Activated CD4-positive, alpha-beta memory T cell treated with anti-CD3 and anti-CD28 coated beads, Interleukin-2, amount 10 ng/mL, durations not matched to agents 7 days and 5 days (primary cell): ENCODE measurements at regions of chr1 and their contacts with region 1.

Region 1: DNA sequence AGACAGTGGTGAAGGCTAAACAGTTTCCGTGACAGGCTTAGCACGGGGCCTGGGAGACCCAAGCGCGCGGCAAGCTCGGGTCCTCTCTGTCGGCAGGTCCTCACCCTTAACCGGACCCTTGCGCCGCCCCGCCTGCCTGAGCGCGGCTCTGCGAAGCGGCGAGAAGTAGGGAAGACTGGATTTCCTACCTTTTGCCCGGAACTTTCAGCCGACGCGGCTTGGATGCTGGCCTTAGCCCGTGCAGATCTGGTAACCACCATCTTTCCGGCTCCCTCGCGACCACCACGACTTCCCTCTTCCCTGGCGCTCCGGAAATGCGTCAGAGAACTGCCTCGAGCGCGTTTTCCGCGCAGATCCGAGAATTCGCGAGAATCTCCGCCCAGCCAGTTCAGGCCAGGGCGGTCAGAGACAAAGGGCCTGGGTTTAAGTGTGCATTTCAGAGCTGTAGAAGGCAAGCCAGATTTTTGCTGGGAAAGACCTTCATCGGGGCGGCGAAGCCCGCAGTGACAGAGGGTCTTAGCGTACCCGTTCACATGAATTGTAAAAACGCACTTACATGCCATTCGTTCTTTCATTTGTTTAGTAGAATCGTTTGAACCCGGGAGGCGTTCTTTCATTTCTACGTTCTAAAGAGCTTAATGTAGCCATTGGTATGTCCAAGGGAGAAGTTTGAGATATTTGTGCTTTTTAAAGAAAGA is at the start of gene DNTTIP2:
- DNase-seq: peak; percentile 93
- H3K4me3 Mint-ChIP-seq: peak within 1 kb of the TSS; percentile 88
- H3K27ac Mint-ChIP-seq: peak within 1 kb of the TSS; percentile 90
- H3K4me1 Mint-ChIP-seq: peaks cover 52% of the 10 kb centered on the region
- H3K27me3 Mint-ChIP-seq: no peaks in the 10 kb centered on the region
- total RNA-seq, gene DNTTIP2: 65.2 to 66.6 TPM

Region 2: GRCh38 chr1:93722081-93723031 is 156.7 kb before region 1 on chr1:
- CTCF ChIA-PET with region 1: no interaction called
- POLR2A ChIA-PET with region 1: no interaction called
- DNase-seq: no peak
- H3K4me3 Mint-ChIP-seq: no peak overlapping the region
- H3K27ac Mint-ChIP-seq: no peak overlapping the region
- H3K4me1 Mint-ChIP-seq: peaks cover 2% of the 10 kb centered on the region
- H3K27me3 Mint-ChIP-seq: no peaks in the 10 kb centered on the region

Region 3: DNA sequence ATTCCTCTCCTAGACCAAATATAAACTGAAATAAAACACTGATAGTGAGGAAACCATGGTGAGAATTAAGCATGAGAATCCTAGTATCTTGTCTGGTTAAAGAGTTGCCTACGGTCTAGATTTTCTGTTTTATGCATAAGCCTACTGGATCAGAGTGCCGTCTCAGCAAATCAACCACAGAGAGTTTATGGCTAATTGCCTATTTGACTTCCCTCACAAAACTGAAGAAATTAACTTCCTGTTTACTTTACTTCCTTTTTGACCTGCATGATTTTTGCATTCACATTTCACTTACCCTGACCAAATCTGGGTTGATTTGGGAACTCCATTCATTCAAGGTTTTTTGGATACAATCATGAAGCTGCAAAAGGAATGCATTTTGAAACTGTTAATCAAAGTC is 25.2 kb after region 1 on chr1:
- CTCF ChIA-PET with region 1: interaction called, 14 read pairs
- POLR2A ChIA-PET with region 1: interaction called, 24 read pairs
- DNase-seq: no peak
- H3K4me3 Mint-ChIP-seq: peak overlapping the region; percentile 16
- H3K27ac Mint-ChIP-seq: peak overlapping the region; percentile 75
- H3K4me1 Mint-ChIP-seq: peaks cover 52% of the 10 kb centered on the region
- H3K27me3 Mint-ChIP-seq: no peaks in the 10 kb centered on the region

Region 4: GRCh38 chr1:93909146-93910050 is 30.4 kb after region 1 on chr1 and contains the start of gene GCLM:
- CTCF ChIA-PET with region 1: interaction called, 14 read pairs
- POLR2A ChIA-PET with region 1: interaction called, 24 read pairs
- DNase-seq: peak; percentile 91
- H3K4me3 Mint-ChIP-seq: peak within 1 kb of the TSS; percentile 83
- H3K27ac Mint-ChIP-seq: peak within 1 kb of the TSS; percentile 86
- H3K4me1 Mint-ChIP-seq: peaks cover 37% of the 10 kb centered on the region
- H3K27me3 Mint-ChIP-seq: peaks cover 21% of the 10 kb centered on the region
- total RNA-seq, gene GCLM: 40.1 to 42.1 TPM

Region 5: GRCh38 chr1:93938466-93939145 is 59.6 kb after region 1 on chr1:
- CTCF ChIA-PET with region 1: no interaction called
- POLR2A ChIA-PET with region 1: no interaction called
- DNase-seq: no peak
- H3K4me3 Mint-ChIP-seq: no peak overlapping the region
- H3K27ac Mint-ChIP-seq: no peak overlapping the region
- H3K4me1 Mint-ChIP-seq: no peaks in the 10 kb centered on the region
- H3K27me3 Mint-ChIP-seq: peaks cover 8% of the 10 kb centered on the region